Psoas muscle (tissue), 8 donors: ENCODE measurements at regions of chr11 and their contacts with region 1.

Region 1: DNA sequence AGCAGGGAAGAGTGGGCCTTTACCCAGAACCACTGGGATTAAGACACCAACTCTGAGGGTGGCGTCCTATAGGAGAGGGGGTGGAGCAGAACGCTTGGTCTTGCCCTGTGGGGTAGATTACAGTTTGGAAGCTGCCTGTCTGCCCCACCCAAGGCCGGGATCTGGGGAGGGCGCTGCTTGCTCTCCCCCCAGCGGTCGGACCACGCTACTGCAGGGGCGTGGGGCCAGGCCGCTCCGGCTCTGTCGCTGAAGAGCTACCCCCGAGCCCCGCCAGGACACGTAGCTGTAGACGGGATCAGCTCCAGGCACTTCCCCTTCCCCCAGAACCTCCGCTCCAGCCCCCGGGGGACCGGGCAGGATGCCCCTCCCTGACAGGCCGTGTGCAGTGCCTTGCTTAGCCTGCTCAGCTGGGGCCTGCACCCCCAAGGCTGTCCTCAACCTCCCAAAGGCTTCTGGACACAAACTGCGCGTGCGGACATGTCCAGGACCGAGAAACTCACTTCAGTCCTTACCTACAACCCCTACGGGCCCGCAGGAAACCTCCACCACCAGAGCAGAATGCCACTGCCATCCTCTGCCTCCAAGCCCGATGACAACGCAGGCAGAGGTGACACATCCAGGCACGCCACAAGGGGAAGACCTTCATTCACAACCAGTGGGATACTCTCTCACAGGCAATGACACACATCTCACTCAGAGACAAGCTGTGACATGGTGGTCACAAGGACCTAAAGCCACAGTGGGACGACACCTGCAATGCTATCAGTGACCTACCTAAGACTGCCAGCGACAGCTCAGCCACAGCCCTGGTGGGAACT is 3.6 kb downstream of the AHNAK start:
- DNase-seq: peak; percentile 84 to 94
- ATAC-seq: peak; percentile 57 to 64 (median 58)
- H3K4me3 ChIP-seq: peak overlapping the region; percentile 91
- H3K27ac ChIP-seq: peak overlapping the region; percentile 99
- H3K4me1 ChIP-seq: peaks cover 66% of the 10 kb centered on the region
- H3K27me3 ChIP-seq: no peaks in the 10 kb centered on the region
- CTCF ChIP-seq: peak; percentile 100

Region 2: GRCh38 chr11:62394825-62395538 is 148.0 kb before region 1 on chr11:
- intact Hi-C with region 1: loop called in 1 of 2 experiments (anchors 5 kb)
- DNase-seq: peak; percentile 76 to 84
- ATAC-seq: peak; percentile 85 to 94 (median 86)
- H3K4me3 ChIP-seq: peak overlapping the region; percentile 50
- H3K27ac ChIP-seq: peak overlapping the region; percentile 7
- H3K4me1 ChIP-seq: peaks cover 22% of the 10 kb centered on the region
- H3K27me3 ChIP-seq: no peaks in the 10 kb centered on the region
- CTCF ChIP-seq: peak; percentile 70

Region 3: DNA sequence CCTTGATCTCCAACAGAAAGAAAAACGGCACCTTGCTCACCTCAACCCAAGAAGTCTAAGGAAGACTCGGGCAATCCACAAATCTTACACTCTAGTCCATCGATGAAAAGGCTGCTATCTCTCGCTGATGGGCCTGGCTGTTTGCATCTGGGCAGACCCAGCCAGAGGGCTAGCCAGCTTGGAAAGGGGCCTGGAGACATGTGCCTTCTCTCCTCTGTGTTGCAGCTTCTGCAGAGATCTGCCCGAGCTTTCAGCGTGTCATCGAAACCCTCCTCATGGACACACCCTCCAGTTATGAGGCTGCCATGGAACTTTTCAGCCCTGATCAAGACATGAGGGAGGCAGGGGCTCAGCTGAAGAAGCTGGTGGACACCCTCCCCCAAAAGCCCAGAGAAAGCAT is 121.0 kb before region 1 on chr11:
- intact Hi-C with region 1: loop called (anchors 2 to 5 kb)
- DNase-seq: peak in 1 of 2 donors; percentile 49
- ATAC-seq: no peak
- H3K4me3 ChIP-seq: no peak overlapping the region
- H3K27ac ChIP-seq: no peak overlapping the region
- H3K4me1 ChIP-seq: no peaks in the 10 kb centered on the region
- H3K27me3 ChIP-seq: no peaks in the 10 kb centered on the region
- CTCF ChIP-seq: no peak

Region 4: GRCh38 chr11:62427630-62428233 is 115.2 kb before region 1 on chr11:
- intact Hi-C with region 1: loop called (anchors 2 to 5 kb)
- DNase-seq: no peak
- ATAC-seq: no peak
- H3K4me3 ChIP-seq: no peak overlapping the region
- H3K27ac ChIP-seq: no peak overlapping the region
- H3K4me1 ChIP-seq: no peaks in the 10 kb centered on the region
- H3K27me3 ChIP-seq: no peaks in the 10 kb centered on the region
- CTCF ChIP-seq: no peak

Region 5: GRCh38 chr11:62497132-62497915 is 45.6 kb before region 1 on chr11:
- intact Hi-C with region 1: loop called (anchors 2 to 5 kb)
- DNase-seq: no peak
- ATAC-seq: peak; percentile 83 to 89 (median 86)
- H3K4me3 ChIP-seq: no peak overlapping the region
- H3K27ac ChIP-seq: peak overlapping the region; percentile 83
- H3K4me1 ChIP-seq: peaks cover 47% of the 10 kb centered on the region
- H3K27me3 ChIP-seq: no peaks in the 10 kb centered on the region
- CTCF ChIP-seq: peak; percentile 57

Region 6: GRCh38 chr11:62508268-62509058 is 34.5 kb before region 1 on chr11:
- intact Hi-C with region 1: loop called (anchors 2 to 5 kb)
- DNase-seq: peak; percentile 75 to 88
- ATAC-seq: peak; percentile 90 to 95 (median 92)
- H3K4me3 ChIP-seq: peak overlapping the region; percentile 52
- H3K27ac ChIP-seq: peak overlapping the region; percentile 83
- H3K4me1 ChIP-seq: peaks cover 5% of the 10 kb centered on the region
- H3K27me3 ChIP-seq: no peaks in the 10 kb centered on the region
- CTCF ChIP-seq: peak; percentile 59

Region 7: GRCh38 chr11:62556108-62556871 is 13.3 kb after region 1 on chr11:
- intact Hi-C with region 1: loop called in 1 of 2 experiments (anchors 2 kb)
- DNase-seq: peak; percentile 94 to 96
- ATAC-seq: peak; percentile 50 to 60 (median 56)
- H3K4me3 ChIP-seq: peak overlapping the region; percentile 41
- H3K27ac ChIP-seq: peak overlapping the region; percentile 99
- H3K4me1 ChIP-seq: peaks cover 72% of the 10 kb centered on the region
- H3K27me3 ChIP-seq: no peaks in the 10 kb centered on the region
- CTCF ChIP-seq: no peak